ENCODE measurements at regions of chr10 and their contacts with region 1.

Region 1: GRCh38 chr10:84375011-84375410 is 46.6 kb downstream of the CCSER2 start:
- DNase-seq: peak in 1 of 2 donors; percentile 26
- H3K4me3 ChIP-seq: no peak overlapping the region
- CTCF ChIP-seq: no peak
- POLR2A ChIP-seq: no peak

Region 2: DNA sequence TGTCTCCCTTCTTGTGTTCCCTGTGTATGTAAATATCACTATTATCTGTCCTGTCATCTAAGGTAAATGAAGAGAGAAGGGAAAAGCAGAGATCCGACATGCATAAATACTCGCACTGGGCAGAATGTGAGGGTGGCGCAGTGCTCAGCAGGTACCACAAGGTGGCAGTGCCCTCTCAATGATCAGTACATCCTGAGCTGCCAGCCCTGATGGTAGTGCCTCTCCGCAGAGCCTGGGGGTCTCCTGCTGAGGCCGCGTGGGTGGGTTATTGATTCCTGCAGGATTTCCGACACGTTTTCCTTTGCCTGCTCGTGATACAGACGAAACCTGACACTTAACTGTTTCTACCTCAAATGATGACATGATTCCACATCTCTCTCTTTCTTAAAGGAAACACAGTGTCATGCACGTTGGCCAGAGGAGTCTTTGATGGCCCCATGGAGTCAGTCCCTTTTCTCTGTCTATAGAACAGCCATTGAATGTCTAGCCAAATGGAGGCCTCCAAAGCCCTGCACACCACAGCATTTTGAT is 110.3 kb before region 1 on chr10:
- intact Hi-C with region 1: loop called (anchors 10 kb)
- DNase-seq: peak; percentile 47 to 93
- H3K4me3 ChIP-seq: no peak overlapping the region
- CTCF ChIP-seq: peak in 1 of 3 donors; percentile 82
- POLR2A ChIP-seq: no peak

Measured in lower leg skin (tissue), 4 donors.